Activated CD4-positive, alpha-beta T cell treated with anti-CD3 and anti-CD28 coated beads, Interleukin-2, amount 10 ng/mL, durations not matched to agents 7 days and 5 days (primary cell): ENCODE measurements at regions of chr5 and their contacts with region 1.

Region 1: DNA sequence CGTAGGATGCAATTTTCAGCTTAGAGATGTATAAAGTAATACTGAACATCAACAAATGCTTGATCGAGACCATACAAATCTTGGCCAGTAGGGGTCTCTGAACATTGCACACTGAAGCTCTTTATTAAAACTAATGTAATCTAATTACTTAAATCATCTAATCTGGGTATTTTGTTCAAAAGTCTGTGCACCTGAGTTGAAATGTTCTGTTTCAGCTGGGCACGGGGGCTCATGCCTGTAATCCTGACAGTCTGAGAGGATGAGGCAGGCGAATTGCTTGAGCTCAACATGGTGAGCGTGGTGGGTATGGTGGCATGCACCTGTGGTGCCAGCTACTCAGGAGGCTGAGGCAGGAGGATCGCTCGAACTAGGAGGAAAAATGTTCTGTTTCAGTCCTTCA is 41.0 kb downstream of the ESM1 start:
- DNase-seq: peak; percentile 60
- H3K4me3 Mint-ChIP-seq: no peak overlapping the region
- H3K27ac Mint-ChIP-seq: no peak overlapping the region
- H3K4me1 Mint-ChIP-seq: peaks cover 12% of the 10 kb centered on the region
- H3K27me3 Mint-ChIP-seq: peaks cover 13% of the 10 kb centered on the region

Region 2: GRCh38 chr5:54658014-54658413 is 286.4 kb before region 1 on chr5:
- CTCF ChIA-PET with region 1: no interaction called
- POLR2A ChIA-PET with region 1: no interaction called
- DNase-seq: no peak
- H3K4me3 Mint-ChIP-seq: no peak overlapping the region
- H3K27ac Mint-ChIP-seq: no peak overlapping the region
- H3K4me1 Mint-ChIP-seq: peaks cover 17% of the 10 kb centered on the region
- H3K27me3 Mint-ChIP-seq: no peaks in the 10 kb centered on the region

Region 3: GRCh38 chr5:54905943-54906537 is 38.3 kb before region 1 on chr5:
- CTCF ChIA-PET with region 1: interaction called, 17 read pairs
- POLR2A ChIA-PET with region 1: interaction called, 3 read pairs
- DNase-seq: peak; percentile 82
- H3K4me3 Mint-ChIP-seq: no peak overlapping the region
- H3K27ac Mint-ChIP-seq: no peak overlapping the region
- H3K4me1 Mint-ChIP-seq: peaks cover 63% of the 10 kb centered on the region
- H3K27me3 Mint-ChIP-seq: peaks cover 31% of the 10 kb centered on the region

Region 4: DNA sequence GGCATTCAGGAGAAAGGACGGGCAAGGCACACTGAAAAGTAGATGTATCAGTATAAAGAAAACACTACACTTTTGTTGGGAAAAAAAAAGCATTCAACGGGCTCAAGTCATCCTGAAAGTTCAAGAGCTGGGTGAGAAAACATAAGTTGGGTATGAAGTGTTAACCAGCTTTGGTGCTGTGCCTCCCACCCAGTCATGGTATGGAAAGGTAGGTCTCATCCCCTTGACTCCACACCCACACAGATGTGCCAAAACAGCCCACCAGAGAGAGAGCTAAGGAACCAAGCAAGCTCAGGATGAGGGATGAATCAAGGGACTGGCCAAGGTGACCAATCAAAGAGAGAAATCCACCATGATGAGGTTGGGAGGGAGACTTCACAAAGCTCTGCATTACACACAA is 13.6 kb before region 1 on chr5:
- CTCF ChIA-PET with region 1: interaction called, 21 read pairs
- POLR2A ChIA-PET with region 1: no interaction called
- DNase-seq: no peak
- H3K4me3 Mint-ChIP-seq: no peak overlapping the region
- H3K27ac Mint-ChIP-seq: no peak overlapping the region
- H3K4me1 Mint-ChIP-seq: peaks cover 14% of the 10 kb centered on the region
- H3K27me3 Mint-ChIP-seq: peaks cover 26% of the 10 kb centered on the region

Region 5: DNA sequence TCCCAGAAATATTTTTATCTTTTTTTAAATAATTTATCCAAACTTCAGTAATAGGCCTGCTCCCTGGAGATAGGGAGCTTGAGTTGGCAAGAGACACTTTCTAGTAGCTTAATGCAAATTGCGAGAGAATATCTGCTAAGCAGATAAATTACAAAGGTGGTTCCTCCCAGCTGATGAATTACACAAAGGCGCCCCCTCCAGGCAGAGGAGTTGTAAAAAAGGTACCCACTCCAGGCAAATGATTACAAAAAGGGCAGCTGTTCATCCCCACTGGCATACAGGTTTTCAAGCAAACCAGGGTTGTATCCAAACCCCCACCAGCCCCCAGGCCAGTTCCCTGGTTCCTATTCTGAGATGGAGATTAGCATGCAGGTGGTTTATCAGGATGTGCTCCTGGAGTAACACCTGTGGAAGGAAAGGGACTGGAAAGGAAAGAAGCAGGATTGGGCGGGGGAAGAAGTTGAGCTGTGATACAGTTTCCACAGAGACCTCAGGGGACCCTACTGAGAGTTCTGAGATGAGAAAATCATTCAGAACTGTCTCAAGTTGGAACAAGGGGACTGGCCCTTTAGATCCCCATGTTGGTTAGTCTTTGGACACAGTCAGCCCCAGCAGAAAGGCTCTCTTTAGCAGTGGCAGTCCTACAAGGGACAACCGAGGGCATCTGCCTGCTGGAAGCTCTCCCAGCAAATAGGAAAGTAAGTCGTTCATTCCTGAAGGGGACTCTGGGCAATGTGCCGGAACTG is 15.5 kb after region 1 on chr5:
- CTCF ChIA-PET with region 1: interaction called, 27 read pairs
- POLR2A ChIA-PET with region 1: no interaction called
- DNase-seq: peak; percentile 21
- H3K4me3 Mint-ChIP-seq: no peak overlapping the region
- H3K27ac Mint-ChIP-seq: no peak overlapping the region
- H3K4me1 Mint-ChIP-seq: peaks cover 7% of the 10 kb centered on the region
- H3K27me3 Mint-ChIP-seq: peaks cover 21% of the 10 kb centered on the region

Region 6: DNA sequence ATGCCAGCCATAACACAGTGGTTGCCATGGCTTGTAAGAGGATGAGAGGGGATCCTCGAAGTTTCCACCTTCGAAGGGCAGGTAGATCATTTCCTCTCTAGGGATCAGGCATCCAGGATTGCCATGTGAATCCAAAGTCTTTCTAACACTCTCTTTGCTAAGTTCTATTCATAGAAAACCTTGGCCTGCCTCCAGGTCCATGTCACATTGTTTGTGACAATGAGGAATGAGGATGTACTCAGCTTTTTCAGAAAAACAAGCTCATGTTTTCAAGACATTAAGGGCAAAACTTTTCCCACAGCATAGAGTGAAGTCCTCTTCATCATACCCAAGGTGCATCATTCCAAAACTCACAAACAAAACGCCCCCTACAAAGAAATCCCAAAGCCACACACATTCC is 21.4 kb after region 1 on chr5:
- CTCF ChIA-PET with region 1: interaction called, 27 read pairs
- POLR2A ChIA-PET with region 1: no interaction called
- DNase-seq: no peak
- H3K4me3 Mint-ChIP-seq: no peak overlapping the region
- H3K27ac Mint-ChIP-seq: no peak overlapping the region
- H3K4me1 Mint-ChIP-seq: peaks cover 5% of the 10 kb centered on the region
- H3K27me3 Mint-ChIP-seq: peaks cover 14% of the 10 kb centered on the region

Region 7: DNA sequence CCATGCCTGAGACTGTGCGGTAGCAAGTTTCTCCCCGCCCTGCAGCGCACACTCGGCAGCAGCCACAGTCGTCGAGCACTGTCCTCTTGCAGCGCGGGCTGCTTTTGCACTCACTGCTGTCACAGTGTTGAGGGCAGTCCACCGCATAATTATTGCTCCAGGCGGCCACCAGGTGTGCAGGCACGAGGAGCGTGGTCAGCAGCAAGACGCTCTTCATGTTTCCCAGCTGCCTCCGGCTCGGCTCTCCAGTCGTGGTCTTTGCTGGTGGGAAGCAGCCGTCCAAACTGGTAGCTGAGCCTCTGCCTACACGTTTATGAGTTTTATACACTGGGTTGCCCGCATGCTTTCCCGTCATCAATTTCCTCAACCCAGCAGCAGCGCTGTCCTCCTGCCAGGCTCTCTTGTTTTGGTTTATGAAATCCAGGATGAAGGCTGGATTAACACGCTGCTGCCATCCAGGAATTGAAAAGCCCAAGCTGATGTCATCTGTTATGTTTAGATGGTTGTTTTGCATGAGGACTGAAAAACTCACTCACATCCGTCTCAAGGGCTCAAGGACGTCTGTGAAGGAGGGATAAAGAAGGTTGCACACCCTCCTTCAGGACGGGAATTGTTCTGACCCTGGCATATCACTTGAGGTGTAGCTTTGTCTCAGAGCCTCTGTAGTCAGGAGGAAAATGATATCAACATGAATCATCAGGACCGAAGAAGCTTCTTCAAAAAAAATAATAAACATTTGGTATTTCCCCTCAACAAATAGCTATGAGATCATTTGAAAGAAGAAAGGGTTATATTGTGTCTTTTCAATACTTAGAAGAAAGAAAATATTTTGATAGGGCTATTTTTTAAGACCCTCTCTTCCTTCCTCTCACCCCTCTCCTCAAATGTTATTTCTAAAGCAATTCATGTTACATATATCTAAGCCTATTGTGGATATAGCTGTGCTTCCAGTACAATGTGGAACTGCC is 41.2 kb after region 1 on chr5 and contains the start of gene ESM1:
- CTCF ChIA-PET with region 1: interaction called, 10 read pairs
- POLR2A ChIA-PET with region 1: no interaction called
- DNase-seq: no peak
- H3K4me3 Mint-ChIP-seq: peak within 1 kb of the TSS; percentile 33
- H3K27ac Mint-ChIP-seq: peak within 1 kb of the TSS; percentile 2
- H3K4me1 Mint-ChIP-seq: peaks cover 63% of the 10 kb centered on the region
- H3K27me3 Mint-ChIP-seq: peaks cover 31% of the 10 kb centered on the region
- total RNA-seq, gene ESM1: not detected